CD4-positive, alpha-beta memory T cell (primary cell): ENCODE measurements at regions of chr4 and their contacts with region 1.

Region 1: DNA sequence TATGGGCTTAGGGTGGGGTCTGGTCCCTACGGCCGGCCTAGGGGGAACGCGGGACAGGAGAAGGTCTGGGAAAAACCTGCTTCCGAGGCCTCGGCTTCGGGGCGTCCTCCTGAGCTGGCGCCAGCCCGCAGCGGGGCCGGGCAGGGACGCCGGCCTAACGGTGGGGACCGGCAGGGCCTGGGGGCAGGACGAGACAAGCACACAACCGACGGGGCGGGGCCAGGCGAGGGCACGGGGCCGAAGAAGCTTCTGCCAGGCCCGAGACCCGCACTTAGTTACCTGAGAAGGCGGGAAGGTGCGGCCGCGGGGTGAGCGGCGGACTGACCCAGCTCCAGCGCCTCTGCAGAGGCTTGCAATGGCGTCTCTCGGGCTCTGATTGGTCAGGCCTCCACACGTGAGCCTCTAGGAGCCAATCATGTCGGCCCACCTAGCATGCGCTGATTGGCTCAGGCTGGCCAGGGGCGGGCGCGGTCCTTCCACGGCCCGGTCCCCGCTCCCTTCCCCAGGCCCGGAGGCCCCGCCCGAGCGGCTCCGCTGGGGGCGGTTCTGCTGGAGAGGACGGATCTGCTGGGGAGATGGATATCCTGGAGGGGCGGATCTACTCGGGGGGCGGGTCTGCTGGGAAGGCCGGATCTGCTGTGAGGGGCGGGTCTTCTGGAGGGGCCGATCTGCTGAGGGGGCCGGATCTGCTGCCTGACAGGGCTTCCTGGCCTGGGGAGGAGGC is 44.3 kb downstream of the CPLX1 start:
- DNase-seq: peak; percentile 99
- H3K4me3 ChIP-seq: peak overlapping the region; percentile 76
- H3K4me3 Mint-ChIP-seq: peak overlapping the region; percentile 88 to 93 (median 93)
- H3K27ac ChIP-seq: peak overlapping the region; percentile 94
- H3K27ac Mint-ChIP-seq: peak overlapping the region; percentile 91 to 98 (median 95)
- H3K4me1 ChIP-seq: peaks cover 66% of the 10 kb centered on the region
- H3K4me1 Mint-ChIP-seq: peaks cover 20 to 64% (median 44%) of the 10 kb centered on the region in 4 donors
- H3K27me3 ChIP-seq: peaks cover 5% of the 10 kb centered on the region
- H3K27me3 Mint-ChIP-seq: peaks cover 2 to 10% of the 10 kb centered on the region in 2 donors

Region 2: DNA sequence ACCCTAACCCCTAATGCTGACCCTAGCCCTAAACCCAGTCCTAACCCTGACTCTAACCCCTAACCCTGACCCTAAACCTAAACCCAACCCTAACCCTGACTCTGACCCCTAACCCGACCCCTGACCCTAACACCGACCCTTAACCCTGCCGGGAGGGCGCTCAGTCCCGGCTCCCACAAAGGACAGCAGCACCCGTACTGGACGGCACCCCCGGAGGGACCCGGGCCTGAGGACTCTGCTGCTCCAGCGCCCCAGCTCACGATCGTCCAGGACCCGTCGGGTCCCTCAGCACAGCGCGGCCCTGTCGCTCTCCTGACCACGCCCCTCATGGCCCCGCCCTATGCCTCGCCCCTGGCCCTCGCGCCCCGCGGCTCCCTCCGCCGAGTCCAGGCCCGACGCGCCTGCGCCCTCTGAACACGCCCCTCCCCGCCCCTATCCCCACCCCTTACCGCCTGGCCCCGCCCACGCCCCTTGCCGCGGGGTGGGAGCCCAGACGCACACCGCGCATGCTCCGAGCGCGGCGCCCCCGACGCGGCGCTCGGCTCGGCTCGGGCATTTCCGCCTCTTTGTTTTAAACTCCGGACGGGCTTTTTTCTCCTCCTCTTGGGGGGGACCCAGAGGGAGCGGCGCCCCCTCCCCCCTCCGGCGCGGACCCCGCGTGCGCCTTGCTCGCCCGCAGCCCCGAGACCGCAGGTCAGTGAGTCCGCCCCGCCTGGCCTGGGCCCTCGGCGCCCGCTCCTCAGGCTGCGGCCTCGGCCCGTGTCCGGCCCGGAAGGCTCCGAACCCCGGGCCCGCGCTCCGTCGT is 76.2 kb before region 1 on chr4 and contains the start of gene PCGF3:
- CTCF ChIA-PET with region 1: no interaction called
- POLR2A ChIA-PET with region 1: interaction called, 3 read pairs
- intact Hi-C with region 1: loop called (anchors 1 kb)
- DNase-seq: peak; percentile 90 to 94 (median 92)
- H3K4me3 ChIP-seq: peak within 1 kb of the TSS; percentile 59 to 69
- H3K4me3 Mint-ChIP-seq: peak within 1 kb of the TSS; percentile 79 to 94 (median 83)
- H3K27ac ChIP-seq: peak within 1 kb of the TSS; percentile 93
- H3K27ac Mint-ChIP-seq: peak within 1 kb of the TSS; percentile 69 to 90 (median 77)
- H3K4me1 ChIP-seq: peaks cover 29% of the 10 kb centered on the region
- H3K4me1 Mint-ChIP-seq: peaks cover 11 to 25% (median 19%) of the 10 kb centered on the region in 4 donors
- H3K27me3 ChIP-seq: no peaks in the 10 kb centered on the region
- H3K27me3 Mint-ChIP-seq: no peaks in the 10 kb centered on the region
- total RNA-seq, gene PCGF3: 66.1 to 73.8 TPM

Region 3: GRCh38 chr4:824461-825237 is 43.0 kb after region 1 on chr4:
- CTCF ChIA-PET with region 1: no interaction called
- POLR2A ChIA-PET with region 1: interaction called, 3 read pairs
- intact Hi-C with region 1: loop called (anchors 5 kb)
- DNase-seq: no peak
- H3K4me3 ChIP-seq: no peak overlapping the region
- H3K4me3 Mint-ChIP-seq: peak overlapping the region in 4 of 8 donors; percentile 10 to 57 (median 17)
- H3K27ac ChIP-seq: no peak overlapping the region
- H3K27ac Mint-ChIP-seq: no peak overlapping the region
- H3K4me1 ChIP-seq: no peaks in the 10 kb centered on the region
- H3K4me1 Mint-ChIP-seq: peaks cover 1 to 9% (median 5%) of the 10 kb centered on the region in 4 donors
- H3K27me3 ChIP-seq: peaks cover 24% of the 10 kb centered on the region
- H3K27me3 Mint-ChIP-seq: peaks cover 24 to 38% of the 10 kb centered on the region in 2 donors

Region 4: GRCh38 chr4:931960-932712 is 150.5 kb after region 1 on chr4 and contains the starts of genes GAK and TMEM175:
- CTCF ChIA-PET with region 1: interaction called, 3 read pairs
- POLR2A ChIA-PET with region 1: interaction called, 27 read pairs
- intact Hi-C with region 1: loop called (anchors 1 kb)
- DNase-seq: peak; percentile 93 to 98 (median 97)
- H3K4me3 ChIP-seq: peak within 1 kb of the TSS; percentile 82 to 94
- H3K4me3 Mint-ChIP-seq: peak within 1 kb of the TSS; percentile 91 to 99 (median 95)
- H3K27ac ChIP-seq: peak within 1 kb of the TSS; percentile 99
- H3K27ac Mint-ChIP-seq: peak within 1 kb of the TSS; percentile 90 to 99 (median 97)
- H3K4me1 ChIP-seq: peaks cover 45% of the 10 kb centered on the region
- H3K4me1 Mint-ChIP-seq: peaks cover 27 to 48% (median 37%) of the 10 kb centered on the region in 4 donors
- H3K27me3 ChIP-seq: no peaks in the 10 kb centered on the region
- H3K27me3 Mint-ChIP-seq: no peaks in the 10 kb centered on the region
- total RNA-seq, gene GAK: 185 to 188 TPM
- total RNA-seq, gene TMEM175: 45.7 to 52.3 TPM

Region 5: DNA sequence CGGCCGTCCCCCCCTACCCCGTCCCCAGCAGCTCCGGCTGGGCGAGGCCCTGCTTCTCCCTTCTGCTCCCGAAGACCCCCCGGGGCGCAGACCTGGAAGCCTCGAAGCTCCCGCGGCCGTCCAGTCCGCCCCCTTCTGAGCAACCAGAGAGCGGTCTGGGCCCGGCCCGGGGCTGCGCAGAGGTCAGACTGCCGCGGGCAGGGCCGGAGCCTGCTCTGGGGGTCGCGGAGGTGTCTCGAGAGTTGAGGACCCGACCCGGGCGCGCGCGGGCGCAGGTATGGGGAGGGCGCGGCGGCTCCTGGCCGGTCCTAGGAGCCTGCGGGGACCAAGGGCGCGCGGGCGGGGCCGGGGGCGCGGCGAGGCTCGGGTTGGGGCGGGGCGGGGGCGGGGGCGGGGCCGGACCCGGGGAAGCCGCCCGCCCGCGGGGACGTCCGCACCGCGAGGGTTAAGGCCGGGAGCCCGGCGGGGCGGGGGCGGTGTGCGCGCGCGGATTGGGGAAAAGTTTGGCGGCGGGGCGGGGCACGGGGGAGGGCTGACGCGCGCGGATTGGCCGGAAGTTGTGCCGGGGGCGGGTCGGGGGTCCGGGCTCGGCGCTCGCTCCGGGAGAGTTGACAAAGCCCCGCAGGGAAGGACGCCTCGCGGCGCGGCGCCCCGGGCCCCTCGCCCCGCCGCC is 229.5 kb after region 1 on chr4 and contains the start of gene FGFRL1:
- CTCF ChIA-PET with region 1: no interaction called
- POLR2A ChIA-PET with region 1: interaction called, 8 read pairs
- intact Hi-C with region 1: loop called (anchors 1 kb)
- DNase-seq: peak; percentile 86 to 90 (median 87)
- H3K4me3 ChIP-seq: peak within 1 kb of the TSS; percentile 22 to 75
- H3K4me3 Mint-ChIP-seq: peak within 1 kb of the TSS; percentile 85 to 94 (median 90)
- H3K27ac ChIP-seq: peak within 1 kb of the TSS; percentile 76
- H3K27ac Mint-ChIP-seq: peak within 1 kb of the TSS; percentile 94 to 98 (median 97)
- H3K4me1 ChIP-seq: peaks cover 25% of the 10 kb centered on the region
- H3K4me1 Mint-ChIP-seq: peaks cover 6 to 17% (median 13%) of the 10 kb centered on the region in 4 donors
- H3K27me3 ChIP-seq: peaks cover 7% of the 10 kb centered on the region
- H3K27me3 Mint-ChIP-seq: peaks cover 14 to 23% of the 10 kb centered on the region in 2 donors
- total RNA-seq, gene FGFRL1: 22.4 TPM